ENCODE measurements at regions of chr1 and their contacts with region 1.

Region 1: GRCh38 chr1:235504496-235505222 is 407 bp upstream of the B3GALNT2 start:
- DNase-seq: peak; percentile 93 to 100
- H3K4me3 ChIP-seq: peak overlapping the region; percentile 77
- H3K27ac ChIP-seq: peak overlapping the region; percentile 97
- H3K4me1 ChIP-seq: peaks cover 38% of the 10 kb centered on the region
- H3K27me3 ChIP-seq: no peaks in the 10 kb centered on the region
- CTCF ChIP-seq: peak; percentile 86

Region 2: GRCh38 chr1:235128456-235129328 is 376.0 kb before region 1 on chr1 and contains the start of gene TOMM20:
- CTCF ChIA-PET with region 1: interaction called, 3 read pairs
- POLR2A ChIA-PET with region 1: no interaction called
- intact Hi-C with region 1: loop called (anchors 2 kb)
- DNase-seq: peak; percentile 93 to 98
- H3K4me3 ChIP-seq: peak within 1 kb of the TSS; percentile 90
- H3K27ac ChIP-seq: peak within 1 kb of the TSS; percentile 74
- H3K4me1 ChIP-seq: peaks cover 43% of the 10 kb centered on the region
- H3K27me3 ChIP-seq: no peaks in the 10 kb centered on the region
- CTCF ChIP-seq: no peak
- total RNA-seq, gene TOMM20: 165 and 187 TPM in 2 replicates

Region 3: GRCh38 chr1:235642011-235642942 is 137.6 kb after region 1 on chr1:
- CTCF ChIA-PET with region 1: no interaction called
- POLR2A ChIA-PET with region 1: no interaction called
- intact Hi-C with region 1: loop called (anchors 2 kb)
- DNase-seq: peak; percentile 82 to 87
- H3K4me3 ChIP-seq: peak overlapping the region; percentile 41; the same call in 1 of the 2 replicates
- H3K27ac ChIP-seq: peak overlapping the region; percentile 63
- H3K4me1 ChIP-seq: peaks cover 29% of the 10 kb centered on the region
- H3K27me3 ChIP-seq: no peaks in the 10 kb centered on the region
- CTCF ChIP-seq: no peak

Region 4: GRCh38 chr1:235791532-235792060 is 286.9 kb after region 1 on chr1:
- CTCF ChIA-PET with region 1: no interaction called
- POLR2A ChIA-PET with region 1: interaction called, 24 read pairs
- intact Hi-C with region 1: no loop called
- DNase-seq: no peak
- H3K4me3 ChIP-seq: no peak overlapping the region
- H3K27ac ChIP-seq: peak overlapping the region; percentile 44
- H3K4me1 ChIP-seq: peaks cover 15% of the 10 kb centered on the region
- H3K27me3 ChIP-seq: no peaks in the 10 kb centered on the region
- CTCF ChIP-seq: no peak

Region 5: GRCh38 chr1:235989105-235989504 is 484.4 kb after region 1 on chr1:
- CTCF ChIA-PET with region 1: interaction called, 11 read pairs
- POLR2A ChIA-PET with region 1: no interaction called
- intact Hi-C with region 1: no loop called
- DNase-seq: no peak
- H3K4me3 ChIP-seq: no peak overlapping the region
- H3K27ac ChIP-seq: no peak overlapping the region
- H3K4me1 ChIP-seq: peaks cover 3% of the 10 kb centered on the region
- H3K27me3 ChIP-seq: no peaks in the 10 kb centered on the region
- CTCF ChIP-seq: no peak

Measured in PC-9 (cell line).